GM10248 (cell line): ENCODE measurements at regions of chr2 and their contacts with region 1.

Region 1: GRCh38 chr2:177535956-177536504 is 143.5 kb downstream of the AGPS start:
- DNase-seq: no peak
- CTCF ChIP-seq: no peak

Region 2: DNA sequence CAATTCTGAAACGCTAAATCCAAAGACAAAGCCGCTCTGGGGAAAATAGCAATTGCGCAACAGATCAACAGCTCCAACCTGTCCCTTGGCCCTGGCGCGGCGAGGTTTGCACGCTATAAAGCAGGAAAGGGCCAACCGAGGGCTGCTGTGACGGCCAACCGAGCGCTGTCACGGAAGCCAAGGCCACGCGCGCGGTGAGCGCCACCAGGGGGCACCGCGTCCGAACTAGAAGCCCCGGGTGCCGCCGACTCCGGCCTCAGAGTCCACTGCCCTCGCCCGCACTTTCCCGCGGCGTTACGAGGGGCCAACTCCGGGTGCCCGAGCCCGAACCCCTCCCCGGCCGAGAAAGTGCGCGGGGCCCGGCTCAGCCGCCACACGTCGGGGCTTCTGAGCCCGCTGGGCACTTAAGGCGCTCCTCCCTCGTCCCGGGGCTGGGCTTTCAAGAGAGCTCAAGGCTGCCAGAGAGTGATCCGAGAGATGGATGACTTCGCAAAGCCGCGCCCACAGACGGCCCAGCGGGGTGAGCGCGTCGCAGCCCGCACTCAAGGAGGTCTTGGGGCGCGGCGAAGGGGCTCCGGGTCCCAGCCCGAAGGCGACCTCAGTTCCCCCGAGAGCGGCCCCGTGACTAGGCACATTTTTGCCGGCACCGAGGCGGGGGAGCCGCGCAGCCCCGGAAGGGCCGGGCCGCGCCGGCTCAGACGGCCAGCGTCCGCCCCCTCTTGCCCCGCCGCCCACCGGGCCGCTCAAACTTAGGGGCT is 272.4 kb before region 1 on chr2:
- CTCF ChIA-PET with region 1: no interaction called
- POLR2A ChIA-PET with region 1: no interaction called
- DNase-seq: peak; percentile 83
- CTCF ChIP-seq: peak; percentile 94

Region 3: DNA sequence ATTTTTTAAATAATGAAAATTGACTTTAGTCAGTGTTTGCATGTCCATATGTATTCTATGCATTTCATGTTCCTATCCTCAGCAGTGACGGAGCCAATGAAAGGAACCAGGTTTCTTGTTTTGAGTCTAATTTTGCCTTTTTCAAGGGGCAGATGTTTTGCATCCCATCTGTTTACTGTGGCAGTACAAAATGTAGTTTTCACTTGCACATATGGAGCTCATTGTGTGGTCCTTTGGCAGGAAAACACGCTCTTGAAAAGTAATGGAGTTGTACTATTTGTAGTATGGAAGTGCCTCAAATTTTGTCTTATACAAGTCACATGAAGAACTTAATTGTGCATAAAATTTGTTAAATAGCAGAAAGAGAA is 15.7 kb before region 1 on chr2:
- CTCF ChIA-PET with region 1: interaction called, 10 read pairs
- POLR2A ChIA-PET with region 1: no interaction called
- DNase-seq: no peak
- CTCF ChIP-seq: no peak

Region 4: GRCh38 chr2:177551989-177552421 is 16.0 kb after region 1 on chr2:
- CTCF ChIA-PET with region 1: interaction called, 15 read pairs
- POLR2A ChIA-PET with region 1: no interaction called
- DNase-seq: no peak
- CTCF ChIP-seq: no peak